ENCODE measurements at regions of chr10 and their contacts with region 1.

Region 1: DNA sequence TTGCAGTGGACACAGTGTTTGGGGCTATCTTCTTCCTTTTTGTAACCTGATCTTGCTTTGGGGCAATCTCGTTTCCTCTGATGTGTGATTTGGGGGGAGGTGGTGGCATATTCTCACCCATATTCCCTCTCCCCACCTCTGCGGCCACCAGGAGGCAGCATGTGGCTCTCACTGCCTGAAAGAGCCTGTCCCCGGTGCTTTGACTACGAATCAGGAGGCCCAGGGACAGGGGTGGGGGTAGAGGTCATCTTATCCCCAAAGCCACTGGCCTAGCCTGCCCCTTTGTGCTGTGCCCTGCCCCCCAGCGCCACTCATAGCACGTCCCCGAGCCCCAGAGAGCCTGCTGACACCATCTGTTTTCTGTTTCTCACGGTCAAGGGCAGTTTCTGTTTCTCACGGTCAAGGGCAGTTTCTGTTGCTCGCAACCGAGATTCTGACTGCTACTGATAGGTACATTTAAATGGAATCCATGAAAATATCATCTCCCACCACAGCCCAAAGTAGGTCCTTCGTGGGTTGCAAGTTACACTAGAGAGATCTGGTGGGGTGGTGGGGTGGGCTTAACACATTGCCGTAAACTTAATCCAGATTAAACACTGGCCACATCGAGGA is 28.2 kb downstream of the PHYH start:
- DNase-seq: peak; percentile 61
- H3K4me3 Mint-ChIP-seq: no peak overlapping the region
- H3K27ac Mint-ChIP-seq: no peak overlapping the region
- H3K4me1 Mint-ChIP-seq: peaks cover 4% of the 10 kb centered on the region
- H3K27me3 Mint-ChIP-seq: no peaks in the 10 kb centered on the region

Region 2: GRCh38 chr10:13348216-13349017 is 76.8 kb after region 1 on chr10 and contains the start of gene SEPHS1:
- CTCF ChIA-PET with region 1: no interaction called
- intact Hi-C with region 1: loop called (anchors 1 kb)
- DNase-seq: peak; percentile 91
- H3K4me3 Mint-ChIP-seq: peak within 1 kb of the TSS; percentile 88
- H3K27ac Mint-ChIP-seq: peak within 1 kb of the TSS; percentile 94
- H3K4me1 Mint-ChIP-seq: peaks cover 57% of the 10 kb centered on the region
- H3K27me3 Mint-ChIP-seq: no peaks in the 10 kb centered on the region
- total RNA-seq, gene SEPHS1: 75.6 to 79.6 TPM

Measured in activated naive CD4-positive, alpha-beta T cell treated with anti-CD3 and anti-CD28 coated beads for 36 hours (primary cell).